OCI-LY7 (cell line): ENCODE measurements at regions of chr19 and their contacts with region 1.

Region 1: DNA sequence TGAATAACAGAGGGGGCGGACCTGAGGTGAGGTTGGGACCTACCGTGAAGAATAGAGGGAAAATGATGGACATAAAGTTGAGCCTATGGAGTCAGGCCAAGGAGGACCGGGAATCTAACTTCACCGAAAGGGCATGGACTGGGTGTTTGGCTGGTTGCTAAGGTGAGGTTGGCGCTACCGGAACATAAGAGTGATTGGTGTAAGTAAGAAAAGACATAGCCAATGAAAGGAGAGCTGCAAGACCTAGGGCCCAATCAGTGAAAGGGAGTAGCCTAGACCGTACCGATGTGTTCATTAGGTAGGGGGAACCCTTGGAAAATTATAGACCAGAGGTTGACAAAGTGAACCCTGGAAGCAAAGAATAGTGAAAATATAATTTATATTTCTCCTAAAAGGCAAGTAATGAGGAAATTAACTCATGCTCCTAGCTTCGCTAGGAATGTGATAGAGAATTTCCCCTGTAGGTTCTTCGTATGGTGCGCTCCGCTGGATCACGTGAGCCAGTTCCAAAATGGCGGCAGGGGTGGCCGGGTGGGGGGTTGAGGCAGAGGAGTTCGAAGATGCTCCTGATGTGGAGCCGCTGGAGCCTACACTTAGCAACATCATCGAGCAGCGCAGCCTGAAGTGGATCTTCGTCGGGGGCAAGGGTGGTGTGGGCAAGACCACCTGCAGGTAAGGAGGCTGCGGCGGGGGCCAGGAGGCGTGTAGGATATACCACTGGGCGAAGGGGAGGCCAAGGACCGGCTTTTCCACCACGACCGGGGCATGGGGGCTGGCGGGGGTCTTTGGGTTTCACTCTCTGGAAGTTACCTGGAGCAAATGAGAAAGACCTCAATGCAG is at the start of gene GET3:
- DNase-seq: peak; percentile 94
- H3K4me3 ChIP-seq: peak within 1 kb of the TSS; percentile 89
- H3K27ac ChIP-seq: peak within 1 kb of the TSS; percentile 51
- H3K4me1 ChIP-seq: peaks cover 31% of the 10 kb centered on the region
- CTCF ChIP-seq: no peak
- total RNA-seq, gene GET3: 40.5 and 48.8 TPM in 2 replicates

Region 2: DNA sequence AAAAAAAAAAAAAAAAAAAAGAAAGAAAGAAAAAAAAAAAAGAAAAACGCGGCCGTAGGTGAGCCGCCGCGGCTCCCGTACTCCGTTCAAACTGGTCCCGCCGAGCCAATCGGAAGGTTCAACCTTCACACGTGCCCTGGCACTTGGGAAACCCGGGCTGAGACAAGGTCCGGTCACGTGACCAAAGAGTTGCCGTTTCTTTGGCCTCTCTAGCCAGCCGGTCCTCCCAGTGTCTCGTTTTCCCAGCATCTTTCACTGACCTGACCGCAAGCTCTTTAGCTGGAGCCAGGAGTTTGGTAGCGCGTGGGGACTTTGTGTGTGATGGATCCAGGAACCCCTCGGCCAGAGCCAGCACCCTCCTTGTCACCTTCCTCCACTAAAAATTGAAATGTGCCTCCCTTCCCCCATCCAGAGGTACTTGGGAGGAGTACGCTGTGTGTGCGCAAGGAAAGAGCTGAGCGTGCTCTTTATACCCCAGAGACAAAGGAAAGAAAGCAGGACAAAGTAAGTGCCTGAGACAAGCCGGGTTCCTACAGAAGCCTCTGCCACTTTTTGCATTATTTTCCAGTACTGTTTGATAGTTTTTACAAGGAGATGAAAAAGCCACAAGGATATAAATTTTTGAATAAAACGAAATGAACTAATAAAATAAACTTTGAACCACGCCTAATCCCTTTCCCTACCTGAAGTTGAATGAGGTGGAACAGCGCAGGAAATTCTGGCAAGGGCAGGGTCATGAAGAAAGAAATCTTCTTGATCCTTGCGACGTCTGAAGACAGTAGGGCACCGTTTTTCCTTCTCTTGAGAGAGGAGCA is 14.4 kb before region 1 on chr19:
- CTCF ChIA-PET with region 1: interaction called, 14 read pairs
- POLR2A ChIA-PET with region 1: interaction called, 32 read pairs
- intact Hi-C with region 1: no loop called
- DNase-seq: peak; percentile 100
- H3K4me3 ChIP-seq: peak overlapping the region; percentile 82
- H3K27ac ChIP-seq: peak overlapping the region; percentile 74
- H3K4me1 ChIP-seq: peaks cover 26% of the 10 kb centered on the region
- CTCF ChIP-seq: no peak